ENCODE measurements at regions of chr12 and their contacts with region 1.

Region 1: DNA sequence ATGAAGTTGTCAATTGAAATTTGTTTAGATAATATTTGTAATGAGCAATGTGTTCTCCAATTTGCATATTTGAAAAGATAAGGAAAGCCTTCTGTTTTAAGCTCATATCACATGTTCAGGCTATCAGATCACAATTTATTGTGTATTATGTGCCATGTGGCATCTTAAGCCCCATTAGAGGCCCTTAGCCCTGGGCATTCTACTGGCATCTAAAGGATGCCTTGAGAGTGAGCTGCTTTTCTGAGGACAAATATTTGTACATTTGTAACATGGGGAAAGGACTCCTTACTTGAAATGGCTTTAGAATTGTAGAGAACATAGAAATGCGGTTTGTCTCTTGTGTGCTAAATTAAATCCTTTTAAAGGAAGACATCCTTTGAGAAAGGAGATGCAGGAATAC is 62.2 kb downstream of the RMST start:
- DNase-seq: no peak
- H3K4me3 ChIP-seq: no peak overlapping the region
- H3K27ac ChIP-seq: no peak overlapping the region
- H3K4me1 ChIP-seq: no peaks in the 10 kb centered on the region
- H3K27me3 ChIP-seq: no peaks in the 10 kb centered on the region
- CTCF ChIP-seq: no peak
- EP300 ChIP-seq: no peak
- POLR2A ChIP-seq: no peak
- RAD21 ChIP-seq: no peak

Region 2: GRCh38 chr12:97513918-97514317 is 10.9 kb before region 1 on chr12:
- CTCF ChIA-PET with region 1: interaction called, 4 read pairs
- POLR2A ChIA-PET with region 1: interaction called, 20 read pairs
- DNase-seq: no peak
- H3K4me3 ChIP-seq: no peak overlapping the region
- H3K27ac ChIP-seq: no peak overlapping the region
- H3K4me1 ChIP-seq: no peaks in the 10 kb centered on the region; a peak in 1 of 7 replicates
- H3K27me3 ChIP-seq: no peaks in the 10 kb centered on the region
- CTCF ChIP-seq: no peak
- EP300 ChIP-seq: no peak
- POLR2A ChIP-seq: no peak
- RAD21 ChIP-seq: no peak

Region 3: GRCh38 chr12:97609957-97610356 is 85.1 kb after region 1 on chr12:
- CTCF ChIA-PET with region 1: no interaction called
- POLR2A ChIA-PET with region 1: no interaction called
- DNase-seq: no peak
- H3K4me3 ChIP-seq: no peak overlapping the region
- H3K27ac ChIP-seq: no peak overlapping the region
- H3K4me1 ChIP-seq: peaks cover 0 to 6% (median 1%) of the 10 kb centered on the region in 4 experiments; a peak in 1 of 7 replicates
- H3K27me3 ChIP-seq: no peaks in the 10 kb centered on the region
- CTCF ChIP-seq: no peak
- EP300 ChIP-seq: no peak
- POLR2A ChIP-seq: no peak
- RAD21 ChIP-seq: no peak